Motor neuron (in vitro differentiated cells): ENCODE measurements at regions of chr11 and their contacts with region 1.

Region 1: DNA sequence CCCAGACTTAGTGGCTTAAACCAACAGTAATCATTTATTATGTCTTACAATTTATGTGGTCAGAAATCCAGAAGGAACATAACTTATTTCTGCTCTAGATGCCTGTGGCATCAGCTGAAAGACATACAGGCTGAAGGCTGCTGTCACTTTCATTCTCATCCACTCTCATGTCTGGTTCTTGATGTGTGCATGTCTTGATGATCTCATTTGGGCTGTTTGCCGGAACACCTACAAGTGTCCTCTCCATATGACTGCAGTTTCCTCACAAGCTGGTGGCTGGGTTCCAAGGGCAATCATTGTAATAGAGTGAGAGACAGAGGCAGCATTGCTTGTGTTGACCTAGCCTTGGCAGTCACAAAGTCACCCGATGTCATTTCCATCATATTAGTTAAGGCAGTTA is 1375.9 kb upstream of the RAG2 start:
- ATAC-seq: no peak
- H3K4me3 ChIP-seq: no peak overlapping the region
- H3K27ac ChIP-seq: no peak overlapping the region
- H3K4me1 ChIP-seq: no peaks in the 10 kb centered on the region

Region 2: DNA sequence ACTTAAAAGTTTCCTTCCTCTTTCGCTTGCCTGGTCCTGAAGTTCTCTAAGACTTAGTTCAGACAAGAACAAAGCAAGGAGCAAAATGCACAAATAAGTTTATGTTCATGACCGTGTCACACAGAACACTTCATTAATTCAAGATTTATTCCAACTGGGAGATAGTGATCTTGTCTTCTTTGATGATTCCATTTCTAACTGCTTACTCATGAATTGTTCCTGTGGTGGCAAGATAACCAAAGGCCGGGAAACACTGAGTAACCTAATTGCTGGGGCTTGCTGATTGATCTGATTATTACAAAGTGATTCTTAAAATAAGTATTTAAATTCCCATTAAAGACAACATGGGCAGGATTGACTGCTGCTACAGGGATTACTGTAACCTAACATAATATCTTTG is 87.0 kb after region 1 on chr11:
- in situ Hi-C with region 1: loop called in 1 of 9 experiments (anchors 25 kb)
- ATAC-seq: no peak
- H3K4me3 ChIP-seq: no peak overlapping the region
- H3K27ac ChIP-seq: no peak overlapping the region
- H3K4me1 ChIP-seq: no peaks in the 10 kb centered on the region

Region 3: GRCh38 chr11:38562562-38562961 is 588.6 kb after region 1 on chr11:
- in situ Hi-C with region 1: no loop called
- ATAC-seq: no peak
- H3K4me3 ChIP-seq: no peak overlapping the region
- H3K27ac ChIP-seq: no peak overlapping the region
- H3K4me1 ChIP-seq: no peaks in the 10 kb centered on the region